HepG2 (cell line): ENCODE measurements at regions of chr6 and their contacts with region 1.

Region 1: DNA sequence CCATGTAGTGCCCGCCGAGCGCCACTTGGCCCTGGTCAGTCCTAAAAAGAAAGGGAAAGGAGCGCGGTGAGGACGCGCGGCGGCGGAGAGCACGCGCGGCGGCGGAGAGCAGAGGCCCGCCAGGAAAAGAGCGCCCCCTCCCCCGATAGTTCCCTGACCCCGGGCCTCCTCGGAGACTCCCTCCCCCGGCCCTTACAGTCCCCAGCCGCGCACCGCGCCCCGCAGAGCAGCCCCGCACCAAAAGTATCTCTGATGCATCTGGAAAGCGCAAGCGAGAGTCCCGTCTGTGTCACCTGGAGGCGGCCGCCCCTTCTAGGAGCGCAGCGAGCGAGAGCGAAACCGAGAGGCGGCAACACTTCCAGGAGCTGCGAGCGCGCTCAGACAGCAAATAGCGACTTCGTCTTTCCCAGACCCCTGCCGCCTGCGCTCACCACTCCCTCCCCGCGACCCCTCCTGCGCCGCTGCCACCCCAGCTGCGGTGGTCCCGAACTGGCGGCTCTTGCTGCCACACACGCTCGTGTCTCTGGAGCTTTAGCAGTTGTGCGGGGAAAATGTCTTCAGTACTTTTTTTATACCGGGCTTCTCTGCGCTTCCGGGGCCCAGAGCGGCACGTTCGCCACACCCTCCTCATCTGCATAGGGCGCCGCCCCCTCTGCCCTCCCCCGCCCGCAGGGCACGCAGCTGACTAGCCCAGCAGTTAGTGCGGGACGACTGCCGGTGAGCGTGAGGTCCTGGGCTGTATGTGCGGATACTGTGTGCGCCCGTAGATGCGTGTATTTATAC is at the start of gene TENT5A:
- DNase-seq: peak; percentile 83
- ATAC-seq: peak; percentile 89
- H3K4me3 ChIP-seq: peak within 1 kb of the TSS; percentile 79 to 91 (median 90)
- H3K27ac ChIP-seq: peak within 1 kb of the TSS; percentile 92
- H3K4me1 ChIP-seq: peaks cover 47% of the 10 kb centered on the region
- H3K27me3 ChIP-seq: no peaks in the 10 kb centered on the region
- CTCF ChIP-seq: peak; percentile 48; the same call in 1 of the 2 replicates
- EP300 ChIP-seq: no peak; a peak in 1 of 4 replicates
- POLR2A ChIP-seq: peak; percentile 59 to 78; a peak in 3 of 4 replicates
- RAD21 ChIP-seq: 0 out of 2 replicates have a peak, but pooled peaks have one; percentile 5
- total RNA-seq, gene TENT5A: 13.8 and 15.4 TPM in 2 replicates

Region 2: DNA sequence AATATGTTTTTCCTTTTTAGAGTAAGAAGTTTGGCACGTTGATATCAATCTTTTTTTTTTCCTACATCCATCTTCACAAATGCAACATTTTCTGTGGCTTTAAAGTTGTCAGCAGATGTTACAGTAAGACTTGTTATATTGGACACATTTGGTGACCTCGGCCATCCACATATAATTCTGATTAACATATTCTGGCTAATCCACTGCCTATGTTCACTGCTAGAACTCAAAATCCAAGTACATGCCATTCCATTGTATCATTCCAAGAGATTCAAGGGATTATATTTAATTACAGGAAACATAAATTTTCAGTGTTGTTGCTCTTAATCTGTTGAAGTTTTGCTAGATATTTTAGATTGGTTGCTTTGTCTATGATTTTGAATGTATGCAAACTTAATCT is 367.4 kb before region 1 on chr6:
- CTCF ChIA-PET with region 1: no interaction called
- POLR2A ChIA-PET with region 1: no interaction called
- in situ Hi-C with region 1: no loop called
- intact Hi-C with region 1: loop called (anchors 10 kb)
- DNase-seq: no peak
- ATAC-seq: no peak
- H3K4me3 ChIP-seq: no peak overlapping the region
- H3K27ac ChIP-seq: no peak overlapping the region
- H3K4me1 ChIP-seq: peaks cover 47% of the 10 kb centered on the region
- H3K27me3 ChIP-seq: no peaks in the 10 kb centered on the region
- CTCF ChIP-seq: no peak
- EP300 ChIP-seq: no peak
- POLR2A ChIP-seq: no peak
- RAD21 ChIP-seq: no peak

Region 3: GRCh38 chr6:81772741-81773140 is 20.4 kb after region 1 on chr6:
- CTCF ChIA-PET with region 1: no interaction called
- POLR2A ChIA-PET with region 1: interaction called, 50 read pairs
- in situ Hi-C with region 1: no loop called
- intact Hi-C with region 1: no loop called
- DNase-seq: no peak
- ATAC-seq: no peak
- H3K4me3 ChIP-seq: no peak overlapping the region
- H3K27ac ChIP-seq: no peak overlapping the region
- H3K4me1 ChIP-seq: peaks cover 76% of the 10 kb centered on the region
- H3K27me3 ChIP-seq: no peaks in the 10 kb centered on the region
- CTCF ChIP-seq: no peak
- EP300 ChIP-seq: no peak
- POLR2A ChIP-seq: no peak
- RAD21 ChIP-seq: no peak

Region 4: DNA sequence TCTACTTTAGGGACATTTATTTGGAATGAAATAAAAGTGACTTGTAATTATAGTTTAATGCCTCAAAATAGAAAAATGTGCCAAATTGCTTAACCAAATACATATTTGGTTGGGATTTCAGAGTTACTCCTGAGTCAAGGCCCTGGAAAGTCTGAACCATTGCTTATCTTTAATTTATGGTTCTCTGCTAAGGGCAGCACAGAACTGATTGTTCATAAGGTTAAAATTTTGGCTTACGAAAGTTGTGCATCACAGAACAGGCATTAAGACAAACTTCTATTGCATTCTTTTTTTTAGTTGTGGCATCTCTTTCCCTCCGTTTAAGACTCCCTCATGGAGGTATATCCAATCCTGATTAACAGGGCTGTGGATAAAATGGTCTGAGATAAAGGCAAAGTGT is 92.4 kb after region 1 on chr6:
- CTCF ChIA-PET with region 1: no interaction called
- POLR2A ChIA-PET with region 1: interaction called, 3 read pairs
- in situ Hi-C with region 1: no loop called
- intact Hi-C with region 1: loop called (anchors 2 kb)
- DNase-seq: no peak
- ATAC-seq: no peak
- H3K4me3 ChIP-seq: no peak overlapping the region
- H3K27ac ChIP-seq: no peak overlapping the region
- H3K4me1 ChIP-seq: peaks cover 46% of the 10 kb centered on the region
- H3K27me3 ChIP-seq: no peaks in the 10 kb centered on the region
- CTCF ChIP-seq: no peak
- EP300 ChIP-seq: no peak
- POLR2A ChIP-seq: no peak
- RAD21 ChIP-seq: no peak

Region 5: GRCh38 chr6:81938014-81938856 is 185.9 kb after region 1 on chr6:
- CTCF ChIA-PET with region 1: no interaction called
- POLR2A ChIA-PET with region 1: interaction called, 8 read pairs
- in situ Hi-C with region 1: no loop called
- intact Hi-C with region 1: loop called (anchors 2 kb)
- DNase-seq: peak; percentile 93
- ATAC-seq: peak; percentile 91
- H3K4me3 ChIP-seq: peak overlapping the region; percentile 11 to 43 (median 37); a peak in 4 of 6 replicates
- H3K27ac ChIP-seq: peak overlapping the region; percentile 64
- H3K4me1 ChIP-seq: peaks cover 65% of the 10 kb centered on the region
- H3K27me3 ChIP-seq: no peaks in the 10 kb centered on the region
- CTCF ChIP-seq: no peak
- EP300 ChIP-seq: peak in 1 of 2 experiments; percentile 80; a peak in 2 of 4 replicates
- POLR2A ChIP-seq: no peak
- RAD21 ChIP-seq: no peak

Region 6: DNA sequence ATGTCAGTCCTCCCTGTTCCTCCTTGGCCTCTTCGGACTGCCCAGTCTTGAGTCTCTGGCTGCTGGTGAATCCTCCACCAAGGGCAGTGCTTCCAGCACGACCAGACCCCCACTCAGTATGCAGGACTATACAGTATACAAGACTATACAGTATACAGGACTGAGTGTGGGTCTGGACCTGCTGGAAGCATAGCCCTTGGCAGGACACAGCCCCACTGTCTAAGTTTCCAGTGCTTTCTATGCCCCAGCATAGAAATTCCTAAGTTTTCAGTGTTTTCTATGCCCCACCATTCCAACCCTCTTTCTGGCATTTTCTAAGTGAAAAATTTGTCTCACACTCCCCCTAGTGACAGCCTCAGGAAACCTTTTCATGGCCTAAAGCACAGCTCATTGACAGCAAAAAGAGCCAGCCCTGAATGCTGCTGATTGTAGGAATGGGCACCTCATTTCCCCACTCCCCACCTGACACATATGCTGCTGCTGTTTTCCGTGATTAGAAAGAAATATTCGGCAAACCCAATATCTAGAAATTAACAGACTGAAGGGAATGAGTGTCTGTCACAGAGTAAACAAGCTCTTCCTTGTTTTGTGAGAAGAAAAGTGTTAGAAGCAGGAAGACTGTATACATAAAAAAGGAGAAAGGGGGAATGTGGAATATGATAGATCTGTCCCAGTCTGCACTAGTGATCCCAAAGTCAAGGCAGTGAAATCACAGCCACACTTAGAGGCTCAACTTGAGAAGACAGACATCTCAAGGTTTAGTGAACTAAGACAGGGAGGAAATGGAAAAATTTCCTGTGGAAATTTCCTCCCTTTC is 288.3 kb after region 1 on chr6:
- CTCF ChIA-PET with region 1: no interaction called
- POLR2A ChIA-PET with region 1: no interaction called
- in situ Hi-C with region 1: no loop called
- intact Hi-C with region 1: loop called (anchors 2 kb)
- DNase-seq: peak; percentile 46
- ATAC-seq: peak; percentile 97
- H3K4me3 ChIP-seq: no peak overlapping the region
- H3K27ac ChIP-seq: no peak overlapping the region
- H3K4me1 ChIP-seq: peaks cover 14% of the 10 kb centered on the region
- H3K27me3 ChIP-seq: no peaks in the 10 kb centered on the region
- CTCF ChIP-seq: peak; percentile 80
- EP300 ChIP-seq: no peak
- POLR2A ChIP-seq: no peak
- RAD21 ChIP-seq: peak; percentile 55

Region 7: GRCh38 chr6:82247634-82248232 is 495.4 kb after region 1 on chr6 and contains the start of gene IBTK:
- CTCF ChIA-PET with region 1: no interaction called
- POLR2A ChIA-PET with region 1: interaction called, 6 read pairs
- in situ Hi-C with region 1: no loop called
- intact Hi-C with region 1: loop called (anchors 2 kb)
- DNase-seq: peak; percentile 94
- ATAC-seq: peak; percentile 88
- H3K4me3 ChIP-seq: peak within 1 kb of the TSS; percentile 73 to 87 (median 83)
- H3K27ac ChIP-seq: peak within 1 kb of the TSS; percentile 100
- H3K4me1 ChIP-seq: peaks cover 45% of the 10 kb centered on the region
- H3K27me3 ChIP-seq: no peaks in the 10 kb centered on the region; a peak in 1 of 5 replicates
- CTCF ChIP-seq: no peak
- EP300 ChIP-seq: peak in 1 of 2 experiments; percentile 39; a peak in 1 of 4 replicates
- POLR2A ChIP-seq: peak; percentile 27 to 71; a peak in 3 of 4 replicates
- RAD21 ChIP-seq: peak; percentile 7; the same call in 1 of the 2 replicates
- total RNA-seq, gene IBTK: 60.0 and 94.7 TPM in 2 replicates